Naive thymus-derived CD4-positive, alpha-beta T cell (primary cell): ENCODE measurements at regions of chr13 and their contacts with region 1.

Region 1: GRCh38 chr13:26186118-26186870 is 35.8 kb downstream of the RNF6 start:
- DNase-seq: peak; percentile 86 to 93 (median 92)
- ATAC-seq: peak; percentile 96
- H3K4me3 ChIP-seq: peak overlapping the region; percentile 86
- H3K4me3 Mint-ChIP-seq: peak overlapping the region; percentile 87 to 99 (median 92)
- H3K27ac ChIP-seq: peak overlapping the region; percentile 80
- H3K27ac Mint-ChIP-seq: peak overlapping the region; percentile 92 to 99 (median 95)
- H3K4me1 ChIP-seq: peaks cover 10 to 13% of the 10 kb centered on the region in 2 donors
- H3K4me1 Mint-ChIP-seq: peaks cover 0 to 36% (median 27%) of the 10 kb centered on the region in 7 donors
- H3K27me3 ChIP-seq: no peaks in the 10 kb centered on the region
- H3K27me3 Mint-ChIP-seq: no peaks in the 10 kb centered on the region

Region 2: GRCh38 chr13:25980255-25980654 is 206.0 kb before region 1 on chr13:
- CTCF ChIA-PET with region 1: no interaction called
- POLR2A ChIA-PET with region 1: no interaction called
- intact Hi-C with region 1: no loop called
- DNase-seq: no peak
- ATAC-seq: no peak
- H3K4me3 ChIP-seq: no peak overlapping the region
- H3K4me3 Mint-ChIP-seq: no peak overlapping the region
- H3K27ac ChIP-seq: no peak overlapping the region
- H3K27ac Mint-ChIP-seq: peak overlapping the region in 2 of 9 donors; percentile 18 to 24
- H3K4me1 ChIP-seq: peaks cover 0 to 9% of the 10 kb centered on the region in 2 donors
- H3K4me1 Mint-ChIP-seq: peaks cover 15 to 38% (median 24%) of the 10 kb centered on the region in 7 donors
- H3K27me3 ChIP-seq: no peaks in the 10 kb centered on the region
- H3K27me3 Mint-ChIP-seq: peaks cover 0 to 7% (median 0%) of the 10 kb centered on the region in 5 donors

Region 3: DNA sequence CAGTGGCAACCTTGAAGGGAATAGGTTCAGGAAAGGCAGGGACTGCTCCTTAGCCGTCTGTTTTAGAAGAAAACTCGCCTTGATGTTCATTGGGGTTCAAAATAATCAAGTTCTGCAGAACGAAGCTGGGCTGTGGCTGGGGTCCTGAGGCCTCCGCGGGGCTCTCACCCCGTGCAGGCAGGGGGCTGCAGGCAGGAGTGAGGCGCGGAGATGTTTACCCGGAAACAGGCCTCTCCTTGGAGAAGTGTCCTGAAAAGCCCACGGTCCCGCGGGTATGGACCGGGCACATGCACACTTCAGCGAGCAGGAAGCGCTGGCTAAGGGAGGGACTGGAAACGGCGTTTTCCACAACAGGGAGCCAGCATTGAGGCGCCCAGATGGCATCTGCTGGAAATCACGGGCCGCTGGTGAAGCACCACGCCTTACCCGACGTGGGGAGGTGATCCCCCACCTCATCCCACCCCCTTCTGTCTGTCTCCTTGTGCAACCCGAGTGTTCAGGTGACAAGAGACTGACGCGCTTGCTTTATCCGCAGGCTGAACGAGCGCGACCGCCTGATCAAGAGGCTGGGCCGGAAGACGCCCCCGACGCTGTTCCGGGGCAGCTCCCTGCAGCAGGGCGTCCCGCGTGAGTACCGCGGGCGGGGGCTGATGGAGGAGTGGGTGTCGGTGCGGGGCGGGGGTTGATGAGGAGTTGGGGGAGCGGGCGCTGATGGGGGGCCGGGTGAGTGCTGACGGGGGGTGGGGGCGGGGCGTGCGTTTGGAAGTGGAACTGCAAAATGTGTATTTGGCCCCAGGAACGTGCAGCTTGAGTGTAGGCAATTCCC is 174.1 kb before region 1 on chr13:
- CTCF ChIA-PET with region 1: no interaction called
- POLR2A ChIA-PET with region 1: no interaction called
- intact Hi-C with region 1: loop called in 1 of 2 experiments (anchors 5 kb)
- DNase-seq: peak; percentile 51 to 88 (median 75)
- ATAC-seq: peak; percentile 95
- H3K4me3 ChIP-seq: peak overlapping the region; percentile 77
- H3K4me3 Mint-ChIP-seq: peak overlapping the region; percentile 81 to 89 (median 86)
- H3K27ac ChIP-seq: peak overlapping the region; percentile 90
- H3K27ac Mint-ChIP-seq: peak overlapping the region; percentile 67 to 95 (median 90)
- H3K4me1 ChIP-seq: peaks cover 0 to 8% of the 10 kb centered on the region in 2 donors
- H3K4me1 Mint-ChIP-seq: peaks cover 11 to 65% (median 48%) of the 10 kb centered on the region in 7 donors
- H3K27me3 ChIP-seq: no peaks in the 10 kb centered on the region
- H3K27me3 Mint-ChIP-seq: no peaks in the 10 kb centered on the region

Region 4: DNA sequence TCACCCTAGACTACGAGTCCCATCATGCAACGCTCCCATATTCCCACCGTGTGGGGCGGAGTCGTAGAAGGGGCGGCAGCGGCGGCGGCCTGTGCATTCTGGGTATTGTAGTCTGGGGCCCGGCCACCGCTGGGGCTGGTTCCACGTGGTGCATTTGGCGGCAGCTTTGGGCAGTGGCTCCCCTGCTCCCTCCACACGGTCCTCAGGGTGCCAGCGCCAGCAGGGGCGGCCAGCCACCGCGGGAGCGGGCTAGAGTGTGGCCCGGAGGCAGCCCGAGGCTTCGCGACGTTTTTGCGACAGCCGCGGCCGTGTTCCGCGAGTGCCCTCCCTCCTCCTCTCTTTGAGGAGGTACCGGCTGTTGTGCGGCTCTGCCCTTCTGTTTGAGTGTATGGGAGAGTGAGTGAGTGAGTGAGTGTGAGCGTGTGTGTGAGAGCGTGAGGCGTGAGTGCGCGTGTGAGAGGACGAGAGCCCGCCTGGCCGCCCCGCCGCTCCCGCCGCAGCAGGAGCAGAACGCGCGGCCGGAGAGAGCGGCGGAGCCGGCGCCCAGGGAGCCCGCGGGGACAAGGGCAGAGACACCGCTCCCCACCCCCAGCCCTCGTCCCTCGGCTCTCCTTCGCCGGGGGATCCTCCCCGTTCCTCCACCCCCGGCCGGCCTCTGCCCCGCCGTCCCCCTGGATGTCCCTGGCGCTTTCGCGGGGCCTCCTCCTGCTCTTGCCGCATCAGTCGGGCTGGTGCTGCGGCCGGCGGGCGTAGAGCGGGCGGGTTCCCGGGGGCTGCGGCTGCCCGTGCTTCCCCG is 67.7 kb after region 1 on chr13 and contains the start of gene CDK8:
- CTCF ChIA-PET with region 1: interaction called, 9 read pairs
- POLR2A ChIA-PET with region 1: interaction called, 4 read pairs
- intact Hi-C with region 1: loop called (anchors 1 kb)
- DNase-seq: peak; percentile 83 to 95 (median 93)
- ATAC-seq: peak; percentile 92
- H3K4me3 ChIP-seq: peak within 1 kb of the TSS; percentile 95
- H3K4me3 Mint-ChIP-seq: peak within 1 kb of the TSS; percentile 83 to 98 (median 94)
- H3K27ac ChIP-seq: peak within 1 kb of the TSS; percentile 85
- H3K27ac Mint-ChIP-seq: peak within 1 kb of the TSS; percentile 82 to 93 (median 90)
- H3K4me1 ChIP-seq: peaks cover 17% of the 10 kb centered on the region in 2 donors
- H3K4me1 Mint-ChIP-seq: peaks cover 25 to 50% (median 41%) of the 10 kb centered on the region in 7 donors
- H3K27me3 ChIP-seq: no peaks in the 10 kb centered on the region
- H3K27me3 Mint-ChIP-seq: peaks cover 0 to 2% (median 0%) of the 10 kb centered on the region in 5 donors
- total RNA-seq, gene CDK8: 9.0 to 14.0 (median 11.6) TPM

Region 5: DNA sequence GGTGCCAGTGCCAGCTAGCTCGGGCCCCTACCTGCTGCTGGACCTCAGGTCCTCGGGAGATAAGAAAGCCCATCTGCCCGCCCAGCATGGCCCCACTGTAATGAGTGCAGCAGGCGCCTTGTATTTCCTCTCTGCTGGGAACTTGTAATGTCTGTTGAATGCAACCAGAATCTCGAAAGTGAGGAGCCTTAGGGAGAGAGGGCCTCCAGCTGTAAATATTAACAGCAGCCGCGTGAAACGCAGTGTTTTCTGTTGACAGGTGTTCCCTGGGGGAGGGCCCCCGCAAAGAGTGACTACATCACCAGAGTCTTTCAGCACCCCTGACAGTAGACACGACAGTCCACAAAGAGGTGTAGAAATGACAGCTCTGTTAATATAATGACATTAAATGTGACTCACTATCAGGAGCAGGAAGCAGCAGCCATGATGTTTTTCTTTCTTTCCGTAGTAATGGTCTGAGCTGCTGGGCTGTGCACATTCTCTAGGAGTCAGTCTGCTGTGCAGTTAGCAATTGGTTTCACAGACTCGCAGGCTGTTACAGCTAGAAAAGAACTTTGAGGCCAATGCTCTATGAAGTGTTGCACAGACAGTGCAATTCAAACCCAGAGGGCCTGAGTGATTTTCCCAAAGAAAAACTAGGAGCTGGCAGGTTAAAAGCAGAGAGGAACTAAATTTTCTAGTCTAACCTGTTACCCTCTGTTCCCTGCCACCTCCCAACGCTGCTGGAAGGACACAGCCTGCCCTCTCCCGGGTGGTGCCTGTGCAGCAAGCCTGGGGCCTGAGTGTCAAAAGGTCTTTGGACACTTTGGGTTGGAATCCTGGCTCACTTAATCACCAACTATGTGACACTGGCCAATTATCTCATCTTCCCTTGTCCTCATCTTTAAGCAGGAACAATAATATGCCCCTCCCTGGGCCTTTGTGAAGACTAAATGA is 312.6 kb after region 1 on chr13:
- CTCF ChIA-PET with region 1: interaction called, 69 read pairs
- POLR2A ChIA-PET with region 1: interaction called, 4 read pairs
- intact Hi-C with region 1: loop called (anchors 1 kb)
- DNase-seq: no peak
- ATAC-seq: no peak
- H3K4me3 ChIP-seq: no peak overlapping the region
- H3K4me3 Mint-ChIP-seq: no peak overlapping the region
- H3K27ac ChIP-seq: no peak overlapping the region
- H3K27ac Mint-ChIP-seq: no peak overlapping the region
- H3K4me1 ChIP-seq: no peaks in the 10 kb centered on the region
- H3K4me1 Mint-ChIP-seq: peaks cover 4 to 15% (median 5%) of the 10 kb centered on the region in 7 donors
- H3K27me3 ChIP-seq: no peaks in the 10 kb centered on the region
- H3K27me3 Mint-ChIP-seq: peaks cover 0 to 9% (median 4%) of the 10 kb centered on the region in 5 donors

Region 6: DNA sequence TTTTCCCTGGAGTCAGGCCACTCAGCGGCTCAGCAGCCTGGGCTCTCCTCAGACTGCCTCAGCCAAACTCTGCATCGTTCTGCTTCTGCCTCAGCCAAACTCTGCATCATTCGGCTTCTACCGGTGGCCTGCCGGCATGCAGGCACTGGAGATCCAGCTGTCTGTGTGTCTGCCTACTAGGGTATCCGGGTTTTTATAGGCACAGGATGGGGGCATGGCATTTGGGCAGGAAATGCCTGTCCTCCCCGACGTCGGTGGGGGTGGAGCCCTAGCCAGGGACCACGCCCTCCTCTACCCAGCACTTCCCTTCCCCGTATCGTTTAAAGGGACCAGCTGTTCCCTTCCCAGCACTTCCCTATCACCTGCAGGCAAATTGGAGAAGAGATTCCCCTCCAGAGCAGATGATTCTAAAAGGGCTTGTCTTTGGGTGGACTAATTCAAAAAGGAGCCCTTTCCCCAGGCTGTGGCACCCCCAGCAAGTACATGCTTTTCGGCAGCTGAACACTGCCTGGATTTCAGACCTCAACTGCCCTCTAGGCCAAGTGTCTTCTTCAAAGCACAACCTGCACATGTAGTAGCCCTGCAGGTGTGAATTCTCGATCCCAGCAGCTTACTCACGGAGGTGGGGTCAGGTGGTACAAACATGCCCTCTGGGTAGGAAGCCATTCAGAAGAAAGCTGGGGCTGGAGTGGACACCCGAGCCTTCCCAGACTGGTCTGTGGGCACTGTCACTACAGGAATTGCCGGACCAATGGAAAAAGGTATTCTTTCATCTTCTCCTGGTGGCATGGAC is 599.7 kb after region 1 on chr13:
- CTCF ChIA-PET with region 1: interaction called, 3 read pairs
- POLR2A ChIA-PET with region 1: no interaction called
- intact Hi-C with region 1: loop called in 1 of 2 experiments (anchors 10 kb)
- DNase-seq: peak; percentile 22 to 76 (median 62)
- ATAC-seq: peak; percentile 80
- H3K4me3 ChIP-seq: peak overlapping the region; percentile 63
- H3K4me3 Mint-ChIP-seq: peak overlapping the region; percentile 74 to 94 (median 87)
- H3K27ac ChIP-seq: peak overlapping the region; percentile 22
- H3K27ac Mint-ChIP-seq: peak overlapping the region in 7 of 9 donors; percentile 6 to 91 (median 77)
- H3K4me1 ChIP-seq: peaks cover 9 to 16% of the 10 kb centered on the region in 2 donors
- H3K4me1 Mint-ChIP-seq: peaks cover 4 to 34% (median 23%) of the 10 kb centered on the region in 7 donors
- H3K27me3 ChIP-seq: no peaks in the 10 kb centered on the region
- H3K27me3 Mint-ChIP-seq: peaks cover 6 to 18% (median 8%) of the 10 kb centered on the region in 5 donors

Region 7: GRCh38 chr13:27251166-27252091 is 1065.1 kb after region 1 on chr13 and contains the start of gene RPL21:
- CTCF ChIA-PET with region 1: no interaction called
- POLR2A ChIA-PET with region 1: no interaction called
- intact Hi-C with region 1: loop called in 1 of 2 experiments (anchors 2 kb)
- DNase-seq: peak; percentile 85 to 95 (median 93)
- ATAC-seq: peak; percentile 95
- H3K4me3 ChIP-seq: peak within 1 kb of the TSS; percentile 82
- H3K4me3 Mint-ChIP-seq: peak within 1 kb of the TSS; percentile 93 to 99 (median 98)
- H3K27ac ChIP-seq: peak within 1 kb of the TSS; percentile 98
- H3K27ac Mint-ChIP-seq: peak within 1 kb of the TSS; percentile 98 to 100 (median 99)
- H3K4me1 ChIP-seq: peaks cover 29 to 35% of the 10 kb centered on the region in 2 donors
- H3K4me1 Mint-ChIP-seq: peaks cover 32 to 78% (median 49%) of the 10 kb centered on the region in 7 donors
- H3K27me3 ChIP-seq: no peaks in the 10 kb centered on the region
- H3K27me3 Mint-ChIP-seq: no peaks in the 10 kb centered on the region
- total RNA-seq, gene RPL21: 962 to 2,668 (median 2,384) TPM

Region 8: GRCh38 chr13:28138012-28138755 is 1951.9 kb after region 1 on chr13 and contains the start of gene PAN3:
- CTCF ChIA-PET with region 1: no interaction called
- POLR2A ChIA-PET with region 1: no interaction called
- intact Hi-C with region 1: loop called in 1 of 2 experiments (anchors 10 kb)
- DNase-seq: peak; percentile 88 to 92 (median 91)
- ATAC-seq: peak; percentile 73
- H3K4me3 ChIP-seq: peak within 1 kb of the TSS; percentile 56
- H3K4me3 Mint-ChIP-seq: peak within 1 kb of the TSS; percentile 90 to 99 (median 96)
- H3K27ac ChIP-seq: peak within 1 kb of the TSS; percentile 99
- H3K27ac Mint-ChIP-seq: peak within 1 kb of the TSS; percentile 96 to 99 (median 98)
- H3K4me1 ChIP-seq: peaks cover 24% of the 10 kb centered on the region in 2 donors
- H3K4me1 Mint-ChIP-seq: peaks cover 43 to 52% (median 47%) of the 10 kb centered on the region in 7 donors
- H3K27me3 ChIP-seq: no peaks in the 10 kb centered on the region
- H3K27me3 Mint-ChIP-seq: peaks cover 0 to 2% (median 0%) of the 10 kb centered on the region in 5 donors
- total RNA-seq, gene PAN3: 49.9 to 82.5 (median 76.4) TPM